Activated CD4-positive, alpha-beta T cell treated with anti-CD3 and anti-CD28 coated beads, Interleukin-2, amount 10 ng/mL, durations not matched to agents 24 days and 14 days (primary cell): ENCODE measurements at regions of chr3 and their contacts with region 1.

Region 1: DNA sequence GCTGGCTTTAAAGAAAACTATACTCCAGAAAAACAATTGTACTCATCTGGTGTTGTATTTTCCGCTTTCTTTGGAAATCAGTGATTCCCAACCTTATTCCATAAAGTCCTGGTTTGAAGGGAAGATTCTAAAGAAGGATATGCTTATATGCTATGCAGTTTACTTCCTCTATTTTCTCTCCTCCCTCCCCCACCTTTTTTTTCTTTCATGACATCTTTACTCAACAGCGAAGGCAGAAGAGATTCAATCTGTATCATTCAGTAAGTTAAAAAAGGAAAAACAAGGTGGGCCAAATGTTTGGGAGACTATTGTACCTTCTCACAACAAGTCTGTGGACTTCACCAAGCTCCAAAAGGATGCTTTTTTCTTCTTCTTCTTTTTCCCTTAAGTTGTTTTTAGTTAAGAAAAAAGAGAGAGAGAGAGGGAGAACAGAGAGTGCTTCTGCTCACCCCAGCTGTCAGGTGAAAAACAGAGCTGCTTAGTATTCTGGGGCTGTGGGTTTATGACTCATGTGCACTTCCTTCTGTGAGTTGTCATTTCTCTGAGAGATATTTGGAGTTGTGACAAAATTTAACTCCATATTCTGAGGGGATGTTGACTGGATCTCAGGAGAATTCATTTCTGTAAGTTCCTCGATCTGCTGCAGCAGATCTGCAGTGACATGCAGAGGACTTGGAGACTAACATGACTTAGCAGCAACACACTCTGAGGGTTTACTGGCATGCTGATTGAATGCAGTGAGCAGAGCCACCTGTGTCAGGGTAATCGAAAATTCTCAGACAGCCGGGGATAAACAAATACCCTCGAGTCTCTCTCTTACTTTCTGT is 70.7 kb downstream of the SSR3 start:
- DNase-seq: peak; percentile 87
- H3K4me3 Mint-ChIP-seq: peak overlapping the region; percentile 81
- H3K27ac Mint-ChIP-seq: peak overlapping the region; percentile 87
- H3K4me1 Mint-ChIP-seq: peaks cover 32% of the 10 kb centered on the region
- H3K27me3 Mint-ChIP-seq: peaks cover 8% of the 10 kb centered on the region

Region 2: GRCh38 chr3:156472150-156472549 is 12.0 kb before region 1 on chr3:
- intact Hi-C with region 1: no loop called
- DNase-seq: peak; percentile 67
- H3K4me3 Mint-ChIP-seq: no peak overlapping the region
- H3K27ac Mint-ChIP-seq: no peak overlapping the region
- H3K4me1 Mint-ChIP-seq: peaks cover 2% of the 10 kb centered on the region
- H3K27me3 Mint-ChIP-seq: peaks cover 55% of the 10 kb centered on the region

Region 3: GRCh38 chr3:156509189-156510174 is 25.3 kb after region 1 on chr3:
- intact Hi-C with region 1: loop called (anchors 1 kb)
- DNase-seq: peak; percentile 74
- H3K4me3 Mint-ChIP-seq: no peak overlapping the region
- H3K27ac Mint-ChIP-seq: no peak overlapping the region
- H3K4me1 Mint-ChIP-seq: peaks cover 15% of the 10 kb centered on the region
- H3K27me3 Mint-ChIP-seq: peaks cover 37% of the 10 kb centered on the region

Region 4: DNA sequence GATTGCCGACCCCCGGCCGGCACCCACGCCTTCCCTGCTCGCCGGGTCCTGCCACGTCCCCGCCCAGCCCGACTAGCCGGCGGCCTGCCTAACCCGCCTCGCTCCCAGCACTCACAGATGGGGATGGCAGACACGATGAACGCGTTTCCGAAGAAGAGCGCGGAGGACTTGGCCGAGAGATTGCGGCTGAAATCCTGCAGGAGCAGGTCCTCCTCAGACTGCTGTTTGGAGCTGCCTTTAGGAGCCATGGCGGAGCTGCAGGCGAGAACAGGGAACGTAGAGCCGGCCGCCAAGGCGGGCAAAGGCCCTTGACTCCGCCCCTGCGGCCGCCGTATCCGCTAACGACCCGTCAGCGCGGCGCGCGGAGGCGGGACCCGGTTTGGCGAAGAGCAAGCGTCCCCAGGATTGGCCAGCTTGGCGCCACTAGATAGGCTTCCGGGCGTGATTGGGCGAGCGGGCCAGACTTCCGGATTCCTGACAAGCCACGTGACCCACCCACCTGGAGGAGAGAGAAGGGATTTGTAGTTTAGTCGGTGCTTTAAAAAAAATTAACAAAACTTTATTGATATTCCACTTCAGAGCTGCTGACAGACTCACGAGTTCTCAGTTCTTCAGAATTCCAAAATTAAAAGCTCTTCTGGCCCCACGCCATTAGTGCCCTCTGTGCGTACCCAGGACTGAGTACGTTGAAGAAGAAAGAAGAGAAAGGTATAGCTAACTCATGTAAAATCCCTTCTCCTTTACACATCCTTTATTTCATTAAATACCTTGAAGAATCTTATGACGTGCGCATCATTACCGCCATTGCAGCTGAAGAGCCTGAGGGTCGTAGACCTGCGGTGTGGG is 70.9 kb after region 1 on chr3 and contains the start of gene SSR3:
- intact Hi-C with region 1: loop called (anchors 1 kb)
- DNase-seq: peak; percentile 100
- H3K4me3 Mint-ChIP-seq: peak within 1 kb of the TSS; percentile 97
- H3K27ac Mint-ChIP-seq: peak within 1 kb of the TSS; percentile 96
- H3K4me1 Mint-ChIP-seq: peaks cover 48% of the 10 kb centered on the region
- H3K27me3 Mint-ChIP-seq: no peaks in the 10 kb centered on the region
- total RNA-seq, gene SSR3: 151 and 153 TPM in 2 replicates

Region 5: DNA sequence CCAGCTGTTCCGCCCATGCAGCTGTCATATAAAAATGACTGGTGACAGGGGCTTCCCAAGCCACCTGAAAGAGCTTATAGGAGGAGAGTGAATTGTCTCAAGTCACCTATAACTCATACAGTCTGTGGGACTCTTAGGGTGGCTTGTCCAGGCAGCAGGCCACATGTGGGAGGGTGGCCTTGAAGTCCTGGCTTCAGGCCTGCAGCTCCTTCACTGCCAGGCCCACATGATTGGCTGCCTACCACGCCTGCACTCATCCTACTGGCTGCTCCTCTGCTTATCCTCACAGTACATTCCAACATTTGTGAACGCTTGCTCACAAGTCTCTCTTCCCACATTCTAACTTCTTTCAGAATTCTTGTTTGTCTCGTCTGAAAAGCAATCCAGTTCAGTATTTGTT is 149.2 kb after region 1 on chr3:
- intact Hi-C with region 1: no loop called
- DNase-seq: no peak
- H3K4me3 Mint-ChIP-seq: no peak overlapping the region
- H3K27ac Mint-ChIP-seq: no peak overlapping the region
- H3K4me1 Mint-ChIP-seq: no peaks in the 10 kb centered on the region
- H3K27me3 Mint-ChIP-seq: peaks cover 6% of the 10 kb centered on the region

Region 6: GRCh38 chr3:156816800-156817645 is 332.8 kb after region 1 on chr3:
- intact Hi-C with region 1: loop called (anchors 5 kb)
- DNase-seq: peak; percentile 97
- H3K4me3 Mint-ChIP-seq: peak overlapping the region; percentile 92
- H3K27ac Mint-ChIP-seq: peak overlapping the region; percentile 98
- H3K4me1 Mint-ChIP-seq: peaks cover 52% of the 10 kb centered on the region
- H3K27me3 Mint-ChIP-seq: no peaks in the 10 kb centered on the region

Region 7: DNA sequence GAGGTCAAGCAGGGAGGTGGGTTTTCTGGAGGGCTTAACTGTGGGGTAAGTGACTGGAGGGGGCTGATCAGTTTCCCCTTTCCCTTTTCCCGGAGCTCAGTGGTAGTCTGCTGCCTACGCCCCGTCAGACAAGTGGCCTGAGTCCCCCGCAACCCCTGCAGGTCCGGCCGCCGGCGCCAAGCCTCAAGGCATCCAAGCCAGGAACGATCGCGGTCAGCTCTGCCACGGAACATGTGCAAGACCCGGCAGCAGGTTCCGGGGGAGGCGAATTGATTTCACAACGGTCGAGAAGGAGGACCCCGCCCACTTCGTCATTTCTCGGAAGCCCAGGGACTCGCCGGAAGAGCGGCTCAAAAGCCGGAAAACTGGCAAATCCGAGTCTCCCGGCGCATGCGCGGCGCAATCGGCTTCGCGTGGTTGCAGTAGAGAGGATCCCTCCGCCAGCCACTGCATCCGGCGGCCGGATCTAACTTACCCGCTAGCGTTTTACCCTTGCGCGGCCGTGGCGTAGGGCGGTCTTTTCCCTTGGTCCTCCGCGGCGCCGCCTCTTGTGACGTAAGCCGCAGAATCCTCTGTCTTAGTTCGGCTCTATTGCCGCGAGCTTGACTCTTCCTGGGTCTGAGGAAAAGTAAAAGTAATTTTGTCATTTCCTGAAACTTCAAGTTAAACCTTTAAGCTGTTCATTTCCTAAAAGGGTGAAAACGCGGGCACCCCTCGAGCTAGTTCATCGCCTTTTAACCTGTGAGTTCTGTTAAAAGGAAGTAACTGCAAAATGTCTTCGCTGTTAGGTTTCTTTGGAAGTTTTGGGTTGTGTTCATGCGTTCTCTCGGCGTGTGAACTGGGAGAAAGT is 690.7 kb after region 1 on chr3:
- intact Hi-C with region 1: loop called (anchors 1 kb)
- DNase-seq: peak; percentile 99
- H3K4me3 Mint-ChIP-seq: peak overlapping the region; percentile 89
- H3K27ac Mint-ChIP-seq: peak overlapping the region; percentile 99
- H3K4me1 Mint-ChIP-seq: peaks cover 25% of the 10 kb centered on the region
- H3K27me3 Mint-ChIP-seq: peaks cover 2% of the 10 kb centered on the region